MCF 10A (cell line): ENCODE measurements at regions of chr15 and their contacts with region 1.

Region 1: DNA sequence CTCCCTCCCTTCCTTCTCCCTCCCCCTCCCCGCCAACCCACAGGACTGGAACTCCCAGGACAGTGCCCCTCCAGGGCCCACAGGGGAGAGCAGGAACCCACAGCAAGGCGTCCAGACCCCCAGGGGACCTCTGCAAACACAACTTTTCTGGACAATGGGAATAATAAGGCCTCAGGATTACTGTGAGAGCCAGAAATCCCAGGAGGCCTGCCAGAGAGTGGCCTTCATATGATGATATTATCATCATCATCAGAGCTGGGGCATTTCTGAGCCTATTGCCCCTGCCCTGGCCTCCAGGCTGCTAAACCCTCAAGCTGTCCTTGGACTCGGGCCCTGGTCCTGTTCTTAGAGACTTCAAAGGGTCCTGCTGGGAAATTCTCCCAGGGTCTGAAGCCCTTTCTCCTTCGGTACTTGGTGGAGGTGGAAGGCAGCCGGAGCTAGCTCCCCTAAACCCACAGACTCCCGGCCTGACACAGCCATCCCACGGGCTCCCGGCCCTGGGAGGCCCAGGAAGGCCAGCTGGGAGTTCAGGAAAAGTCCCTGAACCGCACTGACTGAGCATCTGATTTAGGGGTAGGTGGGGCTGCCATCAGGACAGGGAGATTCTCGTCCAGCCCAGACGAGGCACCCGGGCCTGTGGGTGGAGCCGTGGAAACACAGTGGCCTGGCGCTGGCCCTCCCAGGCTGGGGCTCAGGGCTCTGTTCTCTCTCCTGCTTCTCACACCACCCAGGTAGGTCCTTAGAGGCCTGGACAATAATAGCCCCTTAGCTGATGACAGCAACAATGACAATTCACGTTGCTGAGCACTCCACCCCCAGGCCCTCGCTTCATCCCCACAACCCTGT is 4.9 kb downstream of the CALML4 start:
- DNase-seq: no peak
- H3K4me3 Mint-ChIP-seq: no peak overlapping the region
- H3K27ac Mint-ChIP-seq: peak overlapping the region; percentile 40
- H3K4me1 Mint-ChIP-seq: no peaks in the 10 kb centered on the region
- H3K27me3 Mint-ChIP-seq: no peaks in the 10 kb centered on the region
- CTCF ChIP-seq: no peak

Region 2: DNA sequence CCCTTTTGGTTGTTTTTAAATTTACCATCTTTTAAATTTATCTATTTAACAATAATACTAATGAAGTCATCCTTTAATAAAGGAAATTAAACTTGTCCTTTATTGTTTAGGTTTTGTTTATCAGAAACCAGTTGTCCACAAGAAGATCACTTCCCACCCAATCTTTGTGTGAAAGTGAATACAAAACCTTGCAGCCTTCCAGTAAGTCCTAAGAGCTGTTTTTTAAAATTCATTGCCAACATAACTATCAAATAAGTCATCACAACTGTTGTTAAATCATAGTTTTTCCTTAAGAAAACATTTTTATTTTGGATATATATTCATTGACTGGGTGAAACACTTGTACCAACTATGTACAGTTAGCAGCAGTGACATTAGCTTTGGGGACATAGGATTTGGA is 54.5 kb before region 1 on chr15:
- CTCF ChIA-PET with region 1: no interaction called
- POLR2A ChIA-PET with region 1: no interaction called
- intact Hi-C with region 1: no loop called
- DNase-seq: no peak
- H3K4me3 Mint-ChIP-seq: no peak overlapping the region
- H3K27ac Mint-ChIP-seq: no peak overlapping the region
- H3K4me1 Mint-ChIP-seq: peaks cover 14% of the 10 kb centered on the region
- H3K27me3 Mint-ChIP-seq: no peaks in the 10 kb centered on the region
- CTCF ChIP-seq: no peak

Region 3: GRCh38 chr15:68210821-68211655 is 10.8 kb after region 1 on chr15:
- CTCF ChIA-PET with region 1: interaction called, 17 read pairs
- POLR2A ChIA-PET with region 1: interaction called, 3 read pairs
- intact Hi-C with region 1: no loop called
- DNase-seq: peak; percentile 42
- H3K4me3 Mint-ChIP-seq: no peak overlapping the region
- H3K27ac Mint-ChIP-seq: no peak overlapping the region
- H3K4me1 Mint-ChIP-seq: peaks cover 6% of the 10 kb centered on the region
- H3K27me3 Mint-ChIP-seq: no peaks in the 10 kb centered on the region
- CTCF ChIP-seq: peak; percentile 87

Region 4: DNA sequence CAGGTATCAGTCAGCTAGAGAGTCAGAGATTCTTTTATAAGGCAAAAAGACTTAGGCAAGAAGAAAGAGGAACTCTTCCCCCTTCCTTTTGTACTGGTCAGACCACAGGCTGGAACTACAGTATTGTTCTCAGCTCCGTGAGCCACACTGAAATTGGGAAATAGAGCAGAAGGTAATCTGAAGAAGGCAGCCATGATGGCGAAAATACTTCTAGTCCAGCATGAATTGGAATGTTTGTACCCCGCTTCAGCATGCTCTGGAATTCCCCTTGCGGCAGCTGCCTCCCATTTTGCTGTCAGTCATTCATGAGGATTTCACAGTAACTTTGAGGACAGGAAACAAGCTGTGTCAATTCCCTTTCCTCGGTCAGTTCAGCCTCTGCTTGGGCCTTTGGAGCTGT is 474.7 kb after region 1 on chr15:
- CTCF ChIA-PET with region 1: no interaction called
- POLR2A ChIA-PET with region 1: no interaction called
- intact Hi-C with region 1: no loop called
- DNase-seq: no peak
- H3K4me3 Mint-ChIP-seq: no peak overlapping the region
- H3K27ac Mint-ChIP-seq: no peak overlapping the region
- H3K4me1 Mint-ChIP-seq: peaks cover 8% of the 10 kb centered on the region
- H3K27me3 Mint-ChIP-seq: no peaks in the 10 kb centered on the region
- CTCF ChIP-seq: no peak